ENCODE measurements at regions of chr11 and their contacts with region 1.

Region 1: DNA sequence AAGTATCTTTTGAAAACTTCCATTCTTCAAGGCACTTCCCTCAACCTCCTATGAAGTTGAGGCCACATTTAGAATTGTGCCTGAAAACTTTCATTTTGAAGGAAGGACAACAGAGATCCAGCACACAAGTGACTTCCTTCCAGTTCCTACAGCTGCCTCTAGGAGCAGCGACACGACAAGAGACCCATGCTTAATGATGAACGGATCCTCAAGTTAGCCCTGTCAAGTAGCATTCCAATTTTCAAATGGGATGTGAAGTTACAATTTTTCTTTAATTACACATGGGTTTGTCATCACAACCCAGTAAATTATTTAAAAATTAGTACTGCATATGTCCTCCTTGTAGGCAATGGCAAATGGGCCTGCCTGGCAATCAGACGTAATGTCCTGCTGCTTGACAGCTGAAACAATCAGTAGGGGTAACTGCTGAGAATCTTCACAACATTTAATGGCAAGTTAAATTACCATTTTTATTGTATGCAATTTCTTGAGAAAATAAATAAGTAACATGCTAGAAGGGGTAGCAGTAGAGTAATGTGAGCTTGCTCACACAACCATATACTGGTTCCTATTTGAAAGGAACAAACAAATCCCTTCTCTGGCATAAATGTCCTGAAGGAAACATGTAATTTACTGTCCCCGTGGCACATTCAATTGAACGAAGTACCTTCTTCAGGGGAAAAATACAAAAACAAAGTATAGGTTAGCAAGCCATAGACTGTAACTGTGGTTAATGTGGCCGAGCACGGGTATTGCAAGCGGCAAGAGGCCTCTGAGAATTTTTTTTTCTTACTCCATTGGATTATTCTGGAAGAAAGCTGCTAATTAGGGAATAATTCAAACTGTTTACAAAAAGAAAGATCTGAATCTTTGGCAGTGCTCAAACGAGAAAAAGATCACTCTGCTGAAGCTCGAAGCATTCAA is 288.3 kb downstream of the CADM1 start:
- DNase-seq: no peak
- ATAC-seq: no peak
- H3K4me3 Mint-ChIP-seq: no peak overlapping the region
- H3K27ac Mint-ChIP-seq: no peak overlapping the region
- H3K4me1 Mint-ChIP-seq: peaks cover 31% of the 10 kb centered on the region
- H3K27me3 Mint-ChIP-seq: peaks cover 63% of the 10 kb centered on the region

Region 2: DNA sequence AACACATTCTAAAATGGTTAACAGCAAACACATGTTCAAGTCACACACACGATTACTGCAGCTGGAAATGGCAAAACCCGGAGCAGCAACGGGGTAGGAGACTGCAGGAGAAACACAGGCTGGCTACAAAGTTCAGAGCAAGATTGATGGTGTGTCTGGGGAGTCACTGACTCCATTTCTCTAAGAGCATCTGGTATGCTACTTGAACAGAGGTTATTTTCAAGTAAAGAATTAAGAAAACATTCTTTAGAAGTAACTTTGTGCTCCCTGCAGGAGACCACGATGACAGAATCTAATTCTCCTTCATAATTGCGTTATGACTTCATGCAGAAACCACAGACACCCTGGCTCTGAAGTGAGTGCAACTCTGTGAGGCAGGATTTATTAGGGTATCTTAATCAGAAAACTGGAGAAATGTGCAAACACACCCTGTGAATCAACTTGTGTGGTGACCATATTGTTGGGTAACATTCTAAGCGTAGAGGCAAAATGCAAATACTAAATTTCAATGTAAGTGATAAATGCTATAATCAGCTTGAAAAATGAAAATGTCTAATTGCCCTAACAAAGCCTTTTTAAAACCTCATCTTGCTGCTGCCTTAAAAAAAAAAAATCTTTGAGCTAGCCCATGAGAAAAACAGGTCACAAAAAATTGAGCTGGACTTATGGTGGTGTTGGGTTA is 14.7 kb before region 1 on chr11:
- CTCF ChIA-PET with region 1: interaction called, 11 read pairs
- DNase-seq: peak; percentile 49
- ATAC-seq: peak; percentile 91
- H3K4me3 Mint-ChIP-seq: no peak overlapping the region
- H3K27ac Mint-ChIP-seq: peak overlapping the region; percentile 62
- H3K4me1 Mint-ChIP-seq: peaks cover 37% of the 10 kb centered on the region
- H3K27me3 Mint-ChIP-seq: peaks cover 32% of the 10 kb centered on the region